Heart left ventricle (tissue), 16 donors: ENCODE measurements at regions of chr11 and their contacts with region 1.

Region 1: DNA sequence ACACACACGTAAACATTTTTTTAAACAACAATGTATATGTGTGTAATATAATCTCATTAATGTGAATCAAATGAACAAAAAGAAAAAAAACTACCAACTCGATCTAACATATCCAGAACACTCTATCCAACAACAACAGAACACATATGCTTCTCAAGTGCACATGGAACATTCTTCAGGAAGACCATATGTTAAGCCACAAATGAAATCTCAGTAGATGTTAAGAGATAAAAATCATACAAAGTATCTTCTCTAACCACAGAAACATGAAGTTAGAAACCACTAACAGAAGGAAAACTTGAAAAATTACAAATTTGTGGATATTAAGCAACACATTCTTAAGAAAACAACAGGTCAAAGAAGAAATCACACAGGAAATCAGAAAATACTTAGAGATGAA is 25.5 kb upstream of the TMEM45B start:
- DNase-seq: no peak
- ATAC-seq: no peak
- H3K4me3 ChIP-seq: no peak overlapping the region
- H3K27ac ChIP-seq: no peak overlapping the region
- H3K4me1 ChIP-seq: peaks cover 0 to 6% (median 0%) of the 10 kb centered on the region in 12 donors
- H3K27me3 ChIP-seq: peaks cover 0 to 14% (median 0%) of the 10 kb centered on the region in 9 donors
- CTCF ChIP-seq: no peak
- POLR2A ChIP-seq: no peak

Region 2: GRCh38 chr11:129840236-129840635 is 50.1 kb after region 1 on chr11:
- intact Hi-C with region 1: loop called in 1 of 10 experiments (anchors 5 kb)
- DNase-seq: no peak
- ATAC-seq: no peak
- H3K4me3 ChIP-seq: no peak overlapping the region
- H3K27ac ChIP-seq: no peak overlapping the region
- H3K4me1 ChIP-seq: no peaks in the 10 kb centered on the region
- H3K27me3 ChIP-seq: no peaks in the 10 kb centered on the region
- CTCF ChIP-seq: no peak
- POLR2A ChIP-seq: no peak